B cell (primary cell): ENCODE measurements at regions of chr3 and their contacts with region 1.

Region 1: DNA sequence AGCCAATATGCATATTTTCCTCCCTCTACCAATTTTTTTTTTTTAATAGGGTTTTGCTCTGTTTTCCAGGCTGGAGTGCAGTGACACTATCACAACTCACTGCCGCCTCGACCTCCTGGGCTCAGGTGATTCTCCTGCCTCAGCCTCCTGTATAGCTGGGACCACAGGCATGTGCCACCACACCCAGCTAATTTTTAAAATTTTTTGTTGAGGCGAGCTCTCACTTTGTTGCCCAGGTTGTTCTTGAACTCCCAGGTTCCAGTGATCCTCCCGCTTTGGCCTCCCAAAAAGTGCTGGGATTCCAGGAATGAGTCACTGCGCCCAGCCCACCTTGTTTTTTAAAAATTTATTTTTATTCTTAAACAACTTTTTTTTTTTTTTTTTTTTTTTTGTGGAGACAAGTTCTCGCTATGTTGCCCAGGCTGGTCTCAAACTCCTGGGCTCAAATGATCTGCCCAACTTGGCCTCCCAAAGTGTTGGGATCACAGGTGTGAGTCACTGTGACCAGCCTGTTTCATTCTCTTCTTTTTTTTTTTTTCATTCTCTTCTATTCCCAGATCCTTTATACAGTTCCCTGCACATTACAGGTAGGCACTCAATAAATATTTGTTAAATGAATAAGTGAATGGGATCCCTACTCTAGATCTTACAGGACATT is 40.5 kb upstream of the PIK3CB start:
- DNase-seq: no peak
- ATAC-seq: no peak
- H3K4me3 ChIP-seq: no peak overlapping the region
- H3K4me3 Mint-ChIP-seq: no peak overlapping the region
- H3K27ac ChIP-seq: no peak overlapping the region
- H3K27ac Mint-ChIP-seq: no peak overlapping the region
- H3K4me1 ChIP-seq: no peaks in the 10 kb centered on the region
- H3K4me1 Mint-ChIP-seq: peaks cover 2% of the 10 kb centered on the region
- H3K27me3 ChIP-seq: no peaks in the 10 kb centered on the region
- H3K27me3 Mint-ChIP-seq: peaks cover 13% of the 10 kb centered on the region
- CTCF ChIP-seq: no peak

Region 2: GRCh38 chr3:138824114-138824506 is 51.1 kb before region 1 on chr3:
- CTCF ChIA-PET with region 1: no interaction called
- POLR2A ChIA-PET with region 1: no interaction called
- intact Hi-C with region 1: no loop called
- DNase-seq: no peak
- ATAC-seq: no peak
- H3K4me3 ChIP-seq: no peak overlapping the region
- H3K4me3 Mint-ChIP-seq: no peak overlapping the region
- H3K27ac ChIP-seq: no peak overlapping the region
- H3K27ac Mint-ChIP-seq: no peak overlapping the region
- H3K4me1 ChIP-seq: no peaks in the 10 kb centered on the region
- H3K4me1 Mint-ChIP-seq: no peaks in the 10 kb centered on the region
- H3K27me3 ChIP-seq: no peaks in the 10 kb centered on the region
- H3K27me3 Mint-ChIP-seq: no peaks in the 10 kb centered on the region
- CTCF ChIP-seq: no peak

Region 3: GRCh38 chr3:138842483-138843188 is 32.6 kb before region 1 on chr3:
- CTCF ChIA-PET with region 1: no interaction called
- POLR2A ChIA-PET with region 1: interaction called, 11 read pairs
- intact Hi-C with region 1: no loop called
- DNase-seq: peak; percentile 27
- ATAC-seq: no peak
- H3K4me3 ChIP-seq: no peak overlapping the region
- H3K4me3 Mint-ChIP-seq: no peak overlapping the region
- H3K27ac ChIP-seq: no peak overlapping the region
- H3K27ac Mint-ChIP-seq: no peak overlapping the region
- H3K4me1 ChIP-seq: no peaks in the 10 kb centered on the region
- H3K4me1 Mint-ChIP-seq: peaks cover 3% of the 10 kb centered on the region
- H3K27me3 ChIP-seq: no peaks in the 10 kb centered on the region
- H3K27me3 Mint-ChIP-seq: no peaks in the 10 kb centered on the region
- CTCF ChIP-seq: no peak